Heart left ventricle (tissue), 16 donors: ENCODE measurements at regions of chr2 and their contacts with region 1.

Region 1: GRCh38 chr2:117835990-117836760 is 21.7 kb downstream of the DDX18 start:
- DNase-seq: peak; percentile 80 to 91 (median 88)
- ATAC-seq: peak; percentile 84 to 98 (median 95)
- H3K4me3 ChIP-seq: peak overlapping the region in 11 of 12 donors; percentile 9 to 61 (median 52)
- H3K27ac ChIP-seq: peak overlapping the region in 8 of 12 donors; percentile 21 to 74 (median 26)
- H3K4me1 ChIP-seq: peaks cover 0 to 10% (median 4%) of the 10 kb centered on the region in 12 donors
- H3K27me3 ChIP-seq: peaks cover 0 to 7% (median 0%) of the 10 kb centered on the region in 9 donors
- CTCF ChIP-seq: peak; percentile 66 to 97 (median 82)
- POLR2A ChIP-seq: no peak

Region 2: GRCh38 chr2:117853873-117854272 is 17.7 kb after region 1 on chr2:
- intact Hi-C with region 1: loop called in 1 of 10 experiments (anchors 1 kb)
- DNase-seq: peak in 2 of 5 donors; percentile 59 to 73
- ATAC-seq: peak in 3 of 4 donors; percentile 45 to 84 (median 46)
- H3K4me3 ChIP-seq: no peak overlapping the region
- H3K27ac ChIP-seq: no peak overlapping the region
- H3K4me1 ChIP-seq: no peaks in the 10 kb centered on the region
- H3K27me3 ChIP-seq: peaks cover 0 to 83% (median 12%) of the 10 kb centered on the region in 9 donors
- CTCF ChIP-seq: no peak
- POLR2A ChIP-seq: no peak

Region 3: DNA sequence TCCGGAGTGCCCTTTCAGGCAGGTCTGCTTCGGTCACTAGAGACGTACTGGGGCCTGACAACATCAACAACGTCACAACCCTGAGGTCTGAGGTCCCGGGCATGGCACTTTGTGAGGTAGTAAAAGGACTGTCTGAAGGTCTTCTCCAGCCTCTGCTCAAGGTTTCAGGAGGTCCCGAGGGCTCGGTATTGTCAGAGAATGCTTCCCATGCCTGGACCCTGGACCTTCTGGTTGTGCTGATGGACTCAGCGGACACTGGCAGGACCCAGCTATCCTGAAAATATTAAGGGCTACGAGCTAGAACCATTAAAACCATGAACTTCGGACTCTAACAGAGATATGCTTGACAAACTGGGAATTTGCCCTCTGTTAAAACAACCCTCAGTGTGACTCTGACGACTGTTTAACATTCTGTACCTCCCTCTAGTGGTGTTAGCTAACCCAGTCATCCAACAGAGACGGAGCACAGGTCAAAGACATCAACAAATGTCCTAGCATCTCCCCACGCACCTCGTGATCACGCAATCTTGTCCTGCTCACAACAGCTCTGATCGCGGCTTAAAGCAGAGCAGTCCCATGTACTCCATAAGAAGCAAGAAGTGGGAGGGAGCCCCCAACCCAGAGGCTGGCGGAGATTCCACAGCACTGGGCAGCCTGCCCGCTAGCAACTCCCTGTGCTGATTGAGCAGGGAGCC is 81.2 kb after region 1 on chr2:
- intact Hi-C with region 1: loop called in 6 of 10 experiments (anchors 5 to 10 kb)
- DNase-seq: no peak
- ATAC-seq: peak in 3 of 4 donors; percentile 41 to 46 (median 45)
- H3K4me3 ChIP-seq: no peak overlapping the region
- H3K27ac ChIP-seq: no peak overlapping the region
- H3K4me1 ChIP-seq: peaks cover 0 to 7% (median 0%) of the 10 kb centered on the region in 12 donors
- H3K27me3 ChIP-seq: no peaks in the 10 kb centered on the region
- CTCF ChIP-seq: peak in 7 of 12 donors; percentile 12 to 33 (median 18)
- POLR2A ChIP-seq: no peak

Region 4: DNA sequence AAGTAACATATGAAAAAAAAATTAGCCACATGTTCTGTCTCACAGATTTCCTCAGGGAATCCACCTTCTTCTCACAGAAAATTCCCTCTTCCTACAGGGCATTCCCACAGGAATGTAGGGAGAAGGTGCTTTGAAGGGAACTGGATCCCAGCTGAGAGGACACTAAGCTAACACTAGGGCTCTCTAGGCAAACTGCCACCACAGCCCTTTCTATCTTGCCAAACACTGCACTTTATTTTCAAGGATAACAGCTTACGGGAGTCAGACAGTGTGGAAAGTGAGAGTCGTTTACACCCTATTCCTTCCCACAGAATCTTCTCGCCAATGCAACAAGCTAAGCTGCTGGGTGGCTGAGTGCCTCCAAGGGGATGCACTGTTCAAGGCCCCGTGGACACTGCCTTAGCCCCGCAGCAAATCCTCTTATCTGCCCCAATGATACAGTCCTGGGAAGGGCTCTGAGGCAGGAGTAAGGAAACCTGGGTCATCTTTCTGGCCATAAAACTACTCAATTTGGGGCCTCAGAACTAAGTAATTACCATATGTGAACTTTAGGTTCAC is 100.8 kb after region 1 on chr2:
- intact Hi-C with region 1: loop called in 2 of 10 experiments (anchors 5 to 10 kb)
- DNase-seq: peak in 1 of 5 donors; percentile 43
- ATAC-seq: peak; percentile 78 to 86 (median 82)
- H3K4me3 ChIP-seq: no peak overlapping the region
- H3K27ac ChIP-seq: peak overlapping the region in 6 of 12 donors; percentile 6 to 50 (median 36)
- H3K4me1 ChIP-seq: peaks cover 0 to 34% (median 8%) of the 10 kb centered on the region in 12 donors
- H3K27me3 ChIP-seq: no peaks in the 10 kb centered on the region
- CTCF ChIP-seq: no peak
- POLR2A ChIP-seq: no peak

Region 5: DNA sequence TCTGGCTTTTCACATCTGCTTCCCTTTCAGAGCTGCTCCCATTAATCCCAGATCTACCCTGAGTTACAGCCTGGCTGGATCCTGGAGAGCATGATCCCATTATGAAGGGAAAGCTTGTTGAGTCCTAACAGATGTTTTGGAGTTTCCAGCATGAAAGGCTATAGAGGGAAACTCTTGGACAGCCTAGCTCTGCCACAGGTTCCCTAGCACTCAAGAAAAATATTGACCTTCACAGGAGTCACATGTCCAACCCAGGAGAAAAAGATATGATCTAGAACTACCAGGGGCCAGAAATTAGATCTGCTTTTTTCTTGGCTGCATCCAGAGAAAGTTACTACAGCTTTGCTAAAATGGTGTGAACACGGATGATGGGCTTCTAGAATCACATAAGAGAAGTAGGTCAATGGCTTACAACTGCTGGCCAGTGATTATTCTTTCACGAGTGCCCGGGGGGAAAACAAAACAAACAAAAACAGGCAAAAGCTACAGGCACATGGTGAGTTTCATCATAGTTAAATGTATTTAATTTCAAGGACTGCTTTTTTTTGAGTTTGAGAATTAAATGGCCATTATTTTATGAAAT is 161.8 kb after region 1 on chr2:
- intact Hi-C with region 1: loop called (anchors 1 to 10 kb)
- DNase-seq: no peak
- ATAC-seq: peak in 3 of 4 donors; percentile 52 to 85 (median 79)
- H3K4me3 ChIP-seq: no peak overlapping the region
- H3K27ac ChIP-seq: peak overlapping the region in 2 of 12 donors; percentile 0 to 6
- H3K4me1 ChIP-seq: peaks cover 0 to 24% (median 8%) of the 10 kb centered on the region in 12 donors
- H3K27me3 ChIP-seq: no peaks in the 10 kb centered on the region
- CTCF ChIP-seq: no peak
- POLR2A ChIP-seq: no peak

Region 6: DNA sequence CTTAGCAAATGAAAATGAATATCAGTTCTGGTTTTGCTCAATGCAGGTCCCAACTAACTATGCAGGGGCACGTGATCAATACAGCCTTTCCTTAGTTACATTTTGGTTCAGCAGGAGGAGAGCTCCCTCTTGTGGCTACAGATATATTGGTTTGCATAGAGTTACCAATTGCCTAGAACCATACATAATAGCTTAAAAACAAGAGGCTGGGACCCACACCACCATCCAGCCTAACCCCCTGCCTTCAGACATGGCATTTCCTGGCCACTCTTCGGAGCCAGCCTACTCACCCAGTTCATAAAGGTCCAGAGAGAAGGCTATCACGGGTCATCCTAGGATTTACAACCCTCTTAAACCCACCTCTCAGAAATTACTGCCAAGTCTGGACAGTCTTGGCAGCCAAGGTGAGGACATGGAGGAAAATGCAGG is 167.2 kb after region 1 on chr2:
- intact Hi-C with region 1: loop called (anchors 1 to 10 kb)
- DNase-seq: peak in 2 of 5 donors; percentile 39 to 45
- ATAC-seq: peak in 3 of 4 donors; percentile 75 to 93 (median 86)
- H3K4me3 ChIP-seq: no peak overlapping the region
- H3K27ac ChIP-seq: no peak overlapping the region
- H3K4me1 ChIP-seq: peaks cover 0 to 51% (median 8%) of the 10 kb centered on the region in 12 donors
- H3K27me3 ChIP-seq: no peaks in the 10 kb centered on the region
- CTCF ChIP-seq: peak; percentile 72 to 90 (median 83)
- POLR2A ChIP-seq: no peak

Region 7: GRCh38 chr2:118016911-118017310 is 180.7 kb after region 1 on chr2:
- intact Hi-C with region 1: no loop called
- DNase-seq: no peak
- ATAC-seq: no peak
- H3K4me3 ChIP-seq: no peak overlapping the region
- H3K27ac ChIP-seq: peak overlapping the region in 1 of 12 donors; percentile 50
- H3K4me1 ChIP-seq: peaks cover under 1 to 27% (median 15%) of the 10 kb centered on the region in 12 donors
- H3K27me3 ChIP-seq: no peaks in the 10 kb centered on the region
- CTCF ChIP-seq: no peak
- POLR2A ChIP-seq: no peak